ENCODE measurements at regions of chr3 and their contacts with region 1.

Region 1: GRCh38 chr3:172595641-172596393 is 72.6 kb upstream of the TNFSF10 start:
- DNase-seq: peak; percentile 55
- ATAC-seq: peak; percentile 15
- H3K4me3 Mint-ChIP-seq: peak overlapping the region; percentile 66
- H3K27ac Mint-ChIP-seq: peak overlapping the region; percentile 75
- H3K4me1 Mint-ChIP-seq: peaks cover 54% of the 10 kb centered on the region
- H3K27me3 Mint-ChIP-seq: peaks cover 4% of the 10 kb centered on the region

Region 2: GRCh38 chr3:172391592-172392302 is 204.1 kb before region 1 on chr3:
- CTCF ChIA-PET with region 1: no interaction called
- POLR2A ChIA-PET with region 1: no interaction called
- intact Hi-C with region 1: no loop called
- DNase-seq: no peak
- ATAC-seq: no peak
- H3K4me3 Mint-ChIP-seq: no peak overlapping the region
- H3K27ac Mint-ChIP-seq: no peak overlapping the region
- H3K4me1 Mint-ChIP-seq: no peaks in the 10 kb centered on the region
- H3K27me3 Mint-ChIP-seq: no peaks in the 10 kb centered on the region

Region 3: DNA sequence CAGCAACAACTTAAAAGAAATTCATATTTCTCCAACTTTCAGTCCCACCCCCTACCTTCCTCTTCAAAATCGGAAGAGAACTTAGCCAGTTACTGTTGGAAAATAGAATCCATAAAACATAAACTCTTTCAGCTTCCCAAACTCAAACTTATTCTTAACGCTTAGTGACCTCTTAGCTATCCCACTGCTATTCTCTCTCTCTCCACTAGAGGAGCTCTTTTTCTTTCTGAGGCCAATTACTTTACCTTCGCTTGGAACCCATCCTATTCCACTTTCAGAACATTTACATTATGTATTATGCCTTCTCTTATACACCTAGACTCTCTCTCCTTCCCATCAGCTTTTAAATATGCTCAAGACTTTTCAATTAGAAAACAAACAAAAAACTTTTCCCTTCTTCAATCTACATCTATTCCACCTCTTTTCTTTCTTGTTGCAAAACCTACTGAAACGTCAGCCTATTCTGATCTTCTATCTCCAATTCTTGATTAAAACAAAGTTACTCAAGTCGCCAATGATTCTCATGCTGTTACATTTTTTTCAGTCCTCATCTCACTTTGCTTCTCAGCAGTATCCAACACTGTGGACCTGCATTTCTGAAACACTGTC is 134.2 kb before region 1 on chr3:
- CTCF ChIA-PET with region 1: interaction called, 33 read pairs
- POLR2A ChIA-PET with region 1: no interaction called
- intact Hi-C with region 1: loop called in 1 of 2 experiments (anchors 2 kb)
- DNase-seq: no peak
- ATAC-seq: peak; percentile 53
- H3K4me3 Mint-ChIP-seq: no peak overlapping the region
- H3K27ac Mint-ChIP-seq: no peak overlapping the region
- H3K4me1 Mint-ChIP-seq: no peaks in the 10 kb centered on the region
- H3K27me3 Mint-ChIP-seq: peaks cover 2% of the 10 kb centered on the region

Region 4: DNA sequence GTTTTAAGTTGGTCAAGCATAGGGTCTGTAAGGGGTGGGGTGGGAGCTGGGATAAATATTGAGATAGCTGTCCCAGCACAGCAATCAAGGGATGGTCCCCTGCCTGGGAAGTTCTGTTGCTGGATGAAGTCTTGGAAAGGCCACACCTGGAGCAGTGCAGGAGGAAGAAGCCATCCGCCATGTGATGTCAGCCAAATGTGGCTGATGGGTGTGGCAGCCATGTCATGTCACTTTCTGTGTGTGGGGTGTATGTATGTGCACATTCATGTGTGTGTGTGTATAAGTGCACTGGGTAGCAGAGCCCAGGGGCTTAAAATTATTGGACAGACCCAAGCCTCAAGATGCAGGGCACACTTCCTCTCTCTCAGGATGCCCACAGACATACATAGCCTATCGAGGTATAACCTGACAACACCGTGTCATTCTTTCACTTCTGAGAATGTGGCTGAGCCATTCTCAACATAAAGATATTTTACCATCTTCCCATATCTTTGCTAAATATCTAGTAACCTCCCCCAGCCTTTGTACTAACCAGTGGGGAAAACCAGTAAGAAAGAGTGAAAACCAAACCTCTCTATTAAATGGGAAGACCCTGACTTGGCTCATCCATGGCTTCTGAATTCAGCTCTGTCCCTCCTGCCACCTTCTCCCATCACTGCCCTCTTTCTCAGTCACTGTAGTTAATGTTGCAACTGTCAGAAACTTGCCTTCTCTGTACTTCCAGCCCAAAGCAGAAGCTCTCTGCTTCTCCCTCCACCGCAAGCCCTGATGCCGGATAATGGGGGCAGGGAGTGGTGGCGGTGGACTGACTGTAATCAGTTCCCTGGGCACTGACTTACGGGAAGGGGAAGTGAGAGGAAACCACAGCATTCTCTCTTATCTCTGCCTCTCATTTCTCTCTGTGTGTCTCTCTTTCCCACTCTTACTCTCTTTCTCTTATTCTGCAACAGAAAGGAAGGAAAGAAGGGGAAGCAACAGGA is 83.7 kb before region 1 on chr3:
- CTCF ChIA-PET with region 1: interaction called, 25 read pairs
- POLR2A ChIA-PET with region 1: interaction called, 4 read pairs
- intact Hi-C with region 1: loop called (anchors 1 kb)
- DNase-seq: peak; percentile 85
- ATAC-seq: peak; percentile 73
- H3K4me3 Mint-ChIP-seq: peak overlapping the region; percentile 67
- H3K27ac Mint-ChIP-seq: peak overlapping the region; percentile 92
- H3K4me1 Mint-ChIP-seq: peaks cover 63% of the 10 kb centered on the region
- H3K27me3 Mint-ChIP-seq: no peaks in the 10 kb centered on the region

Region 5: DNA sequence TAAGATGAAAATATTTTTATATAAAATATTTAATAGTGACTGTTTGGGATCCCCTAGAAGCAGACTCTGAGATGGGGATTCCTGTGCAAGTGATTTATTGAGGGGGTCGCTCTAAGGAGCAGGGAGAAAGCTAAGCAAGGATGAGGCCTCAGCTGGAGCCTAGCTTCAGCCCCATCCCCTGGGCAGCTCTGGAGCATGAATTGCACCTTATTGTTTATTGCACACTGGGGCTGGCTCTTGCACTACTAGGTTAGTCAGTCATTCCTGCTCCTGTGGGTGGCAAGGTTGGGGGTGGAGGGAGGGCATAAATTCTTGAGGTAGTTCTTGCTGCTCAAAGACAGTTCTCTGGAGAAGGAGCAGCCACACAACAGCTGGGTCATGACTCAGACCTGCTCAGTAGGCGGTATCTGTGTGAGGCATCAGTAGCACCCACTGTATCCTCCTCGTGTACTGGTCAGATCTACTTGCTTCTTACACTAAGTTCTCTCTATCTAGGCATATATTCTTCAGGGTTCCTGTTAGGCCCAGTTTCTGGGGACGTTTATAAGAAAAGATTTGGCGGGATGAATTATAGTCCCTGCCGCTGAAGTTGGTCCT is 45.4 kb before region 1 on chr3:
- CTCF ChIA-PET with region 1: interaction called, 5 read pairs
- POLR2A ChIA-PET with region 1: no interaction called
- intact Hi-C with region 1: loop called (anchors 1 to 5 kb)
- DNase-seq: peak; percentile 92
- ATAC-seq: peak; percentile 100
- H3K4me3 Mint-ChIP-seq: no peak overlapping the region
- H3K27ac Mint-ChIP-seq: peak overlapping the region; percentile 82
- H3K4me1 Mint-ChIP-seq: peaks cover 32% of the 10 kb centered on the region
- H3K27me3 Mint-ChIP-seq: no peaks in the 10 kb centered on the region

Region 6: GRCh38 chr3:172607305-172608121 is 11.7 kb after region 1 on chr3:
- CTCF ChIA-PET with region 1: interaction called, 52 read pairs
- POLR2A ChIA-PET with region 1: interaction called, 8 read pairs
- intact Hi-C with region 1: no loop called
- DNase-seq: no peak
- ATAC-seq: peak; percentile 36
- H3K4me3 Mint-ChIP-seq: no peak overlapping the region
- H3K27ac Mint-ChIP-seq: no peak overlapping the region
- H3K4me1 Mint-ChIP-seq: peaks cover 9% of the 10 kb centered on the region
- H3K27me3 Mint-ChIP-seq: no peaks in the 10 kb centered on the region

Region 7: DNA sequence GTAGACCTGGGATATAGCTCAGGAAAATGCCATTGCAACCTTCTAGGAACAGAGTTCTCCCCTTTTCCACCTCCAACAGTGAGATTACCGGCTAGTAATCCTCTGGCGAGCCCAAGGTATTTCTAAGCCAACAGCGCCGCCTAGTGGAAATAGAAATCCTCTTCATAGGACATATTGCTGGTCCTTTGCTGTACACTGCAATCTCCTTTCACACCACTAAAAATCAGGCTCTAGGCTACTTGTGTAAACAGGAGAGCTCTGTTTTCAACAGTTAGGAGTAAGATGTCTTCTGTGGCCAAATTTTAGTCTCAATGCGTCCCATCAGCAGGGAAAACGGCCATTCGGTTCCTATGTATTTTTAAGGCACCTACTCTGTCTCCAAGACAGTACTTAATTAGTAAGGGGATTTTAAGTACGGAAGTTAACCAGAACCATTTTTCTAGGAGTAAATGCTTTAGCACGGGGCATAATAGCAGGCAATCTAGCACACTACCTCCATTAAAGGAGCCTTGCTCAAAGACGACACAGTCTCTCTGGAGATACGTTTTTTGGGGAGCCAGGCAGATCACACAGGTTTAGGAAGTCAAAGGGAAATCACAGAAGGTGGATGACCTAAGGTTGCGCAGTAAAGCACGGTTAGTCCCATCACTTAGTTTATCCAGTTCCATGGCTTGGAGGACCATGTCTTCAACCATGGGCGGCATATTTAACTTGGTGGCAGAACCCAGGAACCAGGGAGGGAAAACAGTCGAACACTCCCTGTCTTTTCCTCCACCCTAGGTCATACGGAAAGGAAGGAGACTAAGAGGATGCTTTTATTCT is 71.3 kb after region 1 on chr3:
- CTCF ChIA-PET with region 1: interaction called, 4 read pairs
- POLR2A ChIA-PET with region 1: no interaction called
- intact Hi-C with region 1: loop called (anchors 1 to 5 kb)
- DNase-seq: peak; percentile 88
- ATAC-seq: peak; percentile 96
- H3K4me3 Mint-ChIP-seq: no peak overlapping the region
- H3K27ac Mint-ChIP-seq: no peak overlapping the region
- H3K4me1 Mint-ChIP-seq: peaks cover 5% of the 10 kb centered on the region
- H3K27me3 Mint-ChIP-seq: no peaks in the 10 kb centered on the region

Region 8: DNA sequence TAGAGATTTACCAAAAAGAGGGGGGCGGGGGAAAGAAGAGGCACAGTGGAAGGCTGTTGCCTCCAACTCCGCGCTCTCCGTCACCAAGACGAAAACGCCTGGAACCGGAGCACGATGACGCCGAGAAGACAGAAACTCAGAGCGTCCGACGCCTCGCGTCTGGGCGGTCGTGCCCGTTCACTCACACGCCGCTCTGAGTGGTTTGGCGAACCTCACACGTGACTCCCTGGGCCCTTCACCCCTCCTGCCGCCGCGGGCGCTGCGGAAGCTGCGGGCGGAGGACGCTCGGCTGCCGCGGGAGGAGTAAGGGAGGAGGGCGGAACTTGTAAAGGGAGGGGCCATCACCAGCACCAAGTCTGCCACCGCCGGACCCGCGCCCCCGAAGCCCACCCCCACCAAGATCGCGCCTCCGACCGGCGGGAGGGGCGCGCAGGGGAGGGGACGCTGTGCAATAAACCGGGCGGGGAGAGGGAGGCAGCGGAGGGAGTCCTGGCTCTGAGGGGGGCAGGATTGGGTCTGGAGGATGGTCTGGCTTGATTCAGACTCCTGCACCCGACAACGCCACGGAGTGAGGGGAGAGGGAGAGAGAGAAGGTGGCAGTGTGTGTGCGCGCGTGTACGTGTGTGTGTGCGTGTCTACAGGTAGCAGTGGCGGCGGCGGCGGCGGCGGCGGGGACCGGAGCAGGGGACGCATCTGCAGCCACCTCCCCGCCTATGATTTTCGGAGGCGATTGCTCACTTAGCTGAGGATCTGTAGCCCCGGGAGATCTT is 799.8 kb after region 1 on chr3:
- CTCF ChIA-PET with region 1: no interaction called
- POLR2A ChIA-PET with region 1: no interaction called
- intact Hi-C with region 1: no loop called
- DNase-seq: peak; percentile 77
- ATAC-seq: peak; percentile 81
- H3K4me3 Mint-ChIP-seq: peak overlapping the region; percentile 67
- H3K27ac Mint-ChIP-seq: no peak overlapping the region
- H3K4me1 Mint-ChIP-seq: peaks cover 31% of the 10 kb centered on the region
- H3K27me3 Mint-ChIP-seq: peaks cover 57% of the 10 kb centered on the region